CD14-positive monocyte (primary cell): ENCODE measurements at regions of chr11 and their contacts with region 1.

Region 1: DNA sequence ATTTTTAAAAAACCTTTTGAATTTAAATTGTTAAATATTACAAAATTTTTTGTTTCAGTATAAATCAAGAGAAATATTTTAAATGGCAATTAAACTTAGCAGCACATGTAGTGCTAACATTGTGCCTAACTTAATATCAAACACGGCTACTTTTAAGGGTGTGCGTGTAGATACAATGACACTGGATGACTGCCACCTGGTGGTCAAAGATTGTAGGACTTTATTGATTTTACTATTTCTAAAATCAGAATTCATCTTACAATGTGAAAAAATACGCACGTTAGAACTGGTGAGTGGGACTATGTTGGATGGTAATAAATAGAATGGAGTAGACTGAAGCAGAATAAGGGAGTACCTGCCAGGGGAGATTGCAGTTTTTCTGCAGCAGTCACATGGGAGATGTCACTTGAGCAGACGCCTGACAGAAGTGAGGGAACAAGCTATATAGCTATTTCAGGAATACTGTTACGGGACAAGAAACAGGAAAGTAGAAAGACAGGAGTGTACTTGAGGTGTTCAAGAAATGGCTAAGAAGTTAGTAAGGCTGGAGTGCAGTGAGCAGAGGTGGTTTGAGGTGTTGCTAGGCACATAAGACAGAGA is 52.9 kb downstream of the UVRAG start:
- DNase-seq: peak; percentile 34 to 65 (median 57)
- H3K4me3 ChIP-seq: no peak overlapping the region
- H3K4me3 Mint-ChIP-seq: no peak overlapping the region
- H3K27ac ChIP-seq: peak overlapping the region in 1 of 2 donors; percentile 16
- H3K27ac Mint-ChIP-seq: peak overlapping the region in 1 of 7 donors; percentile 17
- H3K4me1 ChIP-seq: peaks cover 12 to 19% of the 10 kb centered on the region in 2 donors
- H3K4me1 Mint-ChIP-seq: peaks cover 44% of the 10 kb centered on the region
- H3K27me3 ChIP-seq: no peaks in the 10 kb centered on the region
- H3K27me3 Mint-ChIP-seq: no peaks in the 10 kb centered on the region
- CTCF ChIP-seq: peak; percentile 88

Region 2: GRCh38 chr11:75721855-75722668 is 145.8 kb before region 1 on chr11:
- intact Hi-C with region 1: loop called (anchors 2 to 5 kb)
- DNase-seq: no peak
- H3K4me3 ChIP-seq: no peak overlapping the region
- H3K4me3 Mint-ChIP-seq: no peak overlapping the region
- H3K27ac ChIP-seq: no peak overlapping the region
- H3K27ac Mint-ChIP-seq: no peak overlapping the region
- H3K4me1 ChIP-seq: no peaks in the 10 kb centered on the region
- H3K4me1 Mint-ChIP-seq: no peaks in the 10 kb centered on the region
- H3K27me3 ChIP-seq: no peaks in the 10 kb centered on the region
- H3K27me3 Mint-ChIP-seq: peaks cover 0 to 4% (median 1%) of the 10 kb centered on the region in 3 donors
- CTCF ChIP-seq: no peak

Region 3: DNA sequence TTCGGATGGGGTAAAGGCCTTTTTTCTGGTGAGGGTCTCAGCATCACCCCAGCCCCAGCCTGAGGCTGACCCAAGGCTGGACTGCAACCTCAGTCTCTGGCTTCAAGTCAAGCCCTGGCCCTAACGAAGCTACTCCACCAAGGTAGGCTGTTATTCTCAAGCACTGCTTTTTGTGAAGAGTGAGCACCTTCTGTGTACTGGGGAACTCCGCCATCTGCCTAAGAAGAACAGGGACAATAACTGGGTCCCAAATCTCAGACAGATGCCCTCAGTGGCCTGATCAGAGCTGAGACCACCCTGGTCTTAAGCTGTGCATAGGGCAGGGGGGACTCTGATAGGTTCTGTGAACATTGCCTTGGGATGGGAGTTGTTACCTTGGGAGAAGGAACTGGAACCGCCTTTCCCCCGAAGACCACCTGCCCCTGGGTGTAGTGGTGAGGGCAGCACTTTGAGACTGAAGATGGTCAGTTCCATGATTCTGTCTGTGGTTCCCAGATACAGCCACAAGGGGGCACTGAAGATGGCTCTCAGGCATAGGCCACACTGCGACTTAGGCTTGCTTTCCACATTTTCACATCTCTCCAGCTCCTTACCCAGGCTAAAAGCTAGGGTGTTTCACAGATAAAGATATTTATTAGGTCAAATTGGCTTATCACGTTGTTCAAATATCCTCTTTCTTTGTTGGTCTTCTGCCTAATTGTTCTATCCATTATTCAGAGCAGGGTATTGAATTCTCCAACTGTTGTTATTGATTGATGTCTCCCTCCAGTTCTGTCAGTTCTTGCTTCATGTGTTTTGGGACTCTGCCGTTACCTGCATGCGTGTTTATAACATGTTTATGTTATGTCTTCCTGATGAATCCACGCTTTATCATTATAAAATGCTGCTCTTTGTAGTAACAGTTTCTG is 64.7 kb before region 1 on chr11:
- intact Hi-C with region 1: loop called (anchors 1 to 5 kb)
- DNase-seq: peak; percentile 66 to 76 (median 73)
- H3K4me3 ChIP-seq: no peak overlapping the region
- H3K4me3 Mint-ChIP-seq: no peak overlapping the region
- H3K27ac ChIP-seq: peak overlapping the region in 1 of 2 donors; percentile 22
- H3K27ac Mint-ChIP-seq: peak overlapping the region in 2 of 7 donors; percentile 48 to 87
- H3K4me1 ChIP-seq: peaks cover 24 to 32% of the 10 kb centered on the region in 2 donors
- H3K4me1 Mint-ChIP-seq: peaks cover 32% of the 10 kb centered on the region
- H3K27me3 ChIP-seq: no peaks in the 10 kb centered on the region
- H3K27me3 Mint-ChIP-seq: peaks cover 0 to 3% (median 0%) of the 10 kb centered on the region in 3 donors
- CTCF ChIP-seq: peak; percentile 92

Region 4: GRCh38 chr11:75850787-75851186 is 17.1 kb before region 1 on chr11:
- intact Hi-C with region 1: no loop called
- DNase-seq: no peak
- H3K4me3 ChIP-seq: no peak overlapping the region
- H3K4me3 Mint-ChIP-seq: peak overlapping the region in 1 of 2 donors; percentile 40
- H3K27ac ChIP-seq: peak overlapping the region in 1 of 2 donors; percentile 39
- H3K27ac Mint-ChIP-seq: peak overlapping the region in 4 of 7 donors; percentile 3 to 74 (median 60)
- H3K4me1 ChIP-seq: peaks cover 8 to 19% of the 10 kb centered on the region in 2 donors
- H3K4me1 Mint-ChIP-seq: peaks cover 15% of the 10 kb centered on the region
- H3K27me3 ChIP-seq: no peaks in the 10 kb centered on the region
- H3K27me3 Mint-ChIP-seq: peaks cover 0 to 1% (median 0%) of the 10 kb centered on the region in 3 donors
- CTCF ChIP-seq: no peak

Region 5: GRCh38 chr11:75879737-75880136 is 11.9 kb after region 1 on chr11:
- intact Hi-C with region 1: loop called in 1 of 2 experiments (anchors 1 kb)
- DNase-seq: no peak
- H3K4me3 ChIP-seq: no peak overlapping the region
- H3K4me3 Mint-ChIP-seq: no peak overlapping the region
- H3K27ac ChIP-seq: no peak overlapping the region
- H3K27ac Mint-ChIP-seq: peak overlapping the region in 1 of 7 donors; percentile 10
- H3K4me1 ChIP-seq: peaks cover 2 to 5% of the 10 kb centered on the region in 2 donors
- H3K4me1 Mint-ChIP-seq: peaks cover 26% of the 10 kb centered on the region
- H3K27me3 ChIP-seq: no peaks in the 10 kb centered on the region
- H3K27me3 Mint-ChIP-seq: no peaks in the 10 kb centered on the region
- CTCF ChIP-seq: no peak